HepG2 (cell line): ENCODE measurements at regions of chr16 and their contacts with region 1.

Region 1: DNA sequence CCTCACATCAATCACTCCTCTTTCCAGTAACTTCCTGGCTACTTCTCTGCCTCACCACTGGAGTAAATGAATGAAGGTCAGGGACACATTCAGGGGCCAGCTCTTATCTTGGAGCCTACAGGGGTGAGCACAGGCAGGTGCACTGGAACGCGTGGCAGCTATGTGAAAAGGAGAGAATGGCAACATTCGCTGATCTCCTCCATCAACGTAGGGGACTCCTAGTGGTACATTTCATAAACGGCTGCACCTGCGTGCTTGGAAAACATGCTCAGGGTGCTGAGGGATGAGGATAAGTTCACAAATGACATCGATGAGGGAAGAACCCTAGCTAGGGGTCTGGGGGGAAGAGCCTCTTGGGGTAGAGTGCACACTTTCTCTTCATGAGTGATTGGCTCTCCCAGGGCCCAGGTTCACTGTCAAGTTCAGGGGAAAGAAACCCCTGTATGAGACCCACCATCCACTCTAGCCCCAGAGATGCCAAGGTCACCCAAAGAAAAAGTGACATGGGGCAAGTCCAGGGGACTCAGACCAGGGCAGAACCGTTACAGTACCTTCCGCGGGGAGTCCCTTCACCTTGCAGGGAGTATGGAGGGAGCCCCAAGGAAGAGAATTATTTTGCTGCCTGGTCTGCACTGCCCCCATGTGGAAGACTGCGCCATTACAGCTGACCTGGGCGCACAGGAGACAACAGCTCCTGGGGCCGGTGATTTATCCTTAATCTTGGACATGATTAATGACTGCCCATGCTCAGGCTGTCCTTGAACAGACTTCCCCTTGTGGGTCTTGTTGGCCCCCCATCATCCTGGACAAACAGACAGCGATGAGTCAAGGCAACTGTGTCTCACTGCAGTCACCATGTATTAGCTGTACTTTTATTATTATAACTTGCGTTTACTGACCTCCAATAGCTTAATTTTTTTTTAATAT is 30.1 kb downstream of the VAC14 start:
- DNase-seq: peak; percentile 55
- ATAC-seq: peak; percentile 87
- H3K4me3 ChIP-seq: no peak overlapping the region
- H3K27ac ChIP-seq: no peak overlapping the region
- H3K4me1 ChIP-seq: peaks cover 12% of the 10 kb centered on the region
- H3K27me3 ChIP-seq: no peaks in the 10 kb centered on the region
- CTCF ChIP-seq: peak; percentile 93
- EP300 ChIP-seq: no peak
- POLR2A ChIP-seq: no peak
- RAD21 ChIP-seq: peak; percentile 95

Region 2: DNA sequence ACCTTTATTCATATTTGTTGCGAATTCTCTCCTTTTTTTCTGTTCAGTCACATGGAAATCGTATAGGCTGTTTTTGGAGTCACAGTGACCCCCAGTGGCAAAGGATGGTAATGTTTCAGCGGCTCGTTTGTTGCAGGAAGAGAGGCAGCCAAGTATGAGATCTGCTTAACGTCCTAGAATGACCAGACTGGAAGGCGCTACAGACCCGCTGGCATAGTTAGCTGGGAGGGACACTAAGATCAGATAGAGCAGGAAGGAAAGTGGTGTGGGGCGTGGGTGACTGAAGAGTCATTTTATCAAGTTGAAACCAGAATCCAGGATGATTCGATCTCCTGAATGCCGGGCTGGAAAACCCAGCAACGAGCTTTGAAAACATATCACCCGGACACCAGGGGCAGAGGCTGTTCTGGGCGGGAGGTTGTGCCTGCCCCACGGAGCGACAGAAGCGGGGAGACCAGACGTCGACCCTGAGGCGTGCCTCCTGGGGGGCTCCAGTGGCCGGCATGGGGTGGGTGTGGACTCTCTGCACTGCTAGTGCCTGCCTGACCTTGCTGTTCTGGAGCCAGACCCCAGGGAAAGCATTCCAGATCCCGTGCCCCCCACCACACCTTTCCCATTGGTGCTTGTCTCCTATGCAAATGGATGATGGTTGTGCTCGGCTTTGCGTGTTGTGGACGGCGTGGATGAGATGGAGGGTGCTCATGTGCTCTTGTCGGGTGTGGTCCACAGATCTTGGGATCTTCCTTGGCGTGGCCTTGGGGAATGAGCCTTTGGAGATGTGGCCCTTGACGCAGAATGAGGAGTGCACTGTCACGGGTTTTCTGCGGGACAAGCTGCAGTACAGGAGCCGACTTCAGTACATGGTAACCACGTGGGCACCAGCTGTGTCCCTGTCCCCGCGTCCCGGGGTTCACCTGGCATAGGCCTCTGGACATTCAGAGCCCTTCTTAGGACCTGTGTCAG is 116.8 kb before region 1 on chr16:
- CTCF ChIA-PET with region 1: interaction called, 17 read pairs
- POLR2A ChIA-PET with region 1: interaction called, 3 read pairs
- in situ Hi-C with region 1: loop called (anchors 5 kb)
- intact Hi-C with region 1: loop called (anchors 1 kb)
- DNase-seq: peak; percentile 86
- ATAC-seq: peak; percentile 51
- H3K4me3 ChIP-seq: peak overlapping the region; percentile 52 to 74 (median 70)
- H3K27ac ChIP-seq: no peak overlapping the region
- H3K4me1 ChIP-seq: peaks cover 39% of the 10 kb centered on the region
- H3K27me3 ChIP-seq: peaks cover 1 to 19% of the 10 kb centered on the region in 2 experiments; a peak in 4 of 5 replicates
- CTCF ChIP-seq: peak; percentile 96
- EP300 ChIP-seq: no peak
- POLR2A ChIP-seq: no peak
- RAD21 ChIP-seq: peak; percentile 85

Region 3: DNA sequence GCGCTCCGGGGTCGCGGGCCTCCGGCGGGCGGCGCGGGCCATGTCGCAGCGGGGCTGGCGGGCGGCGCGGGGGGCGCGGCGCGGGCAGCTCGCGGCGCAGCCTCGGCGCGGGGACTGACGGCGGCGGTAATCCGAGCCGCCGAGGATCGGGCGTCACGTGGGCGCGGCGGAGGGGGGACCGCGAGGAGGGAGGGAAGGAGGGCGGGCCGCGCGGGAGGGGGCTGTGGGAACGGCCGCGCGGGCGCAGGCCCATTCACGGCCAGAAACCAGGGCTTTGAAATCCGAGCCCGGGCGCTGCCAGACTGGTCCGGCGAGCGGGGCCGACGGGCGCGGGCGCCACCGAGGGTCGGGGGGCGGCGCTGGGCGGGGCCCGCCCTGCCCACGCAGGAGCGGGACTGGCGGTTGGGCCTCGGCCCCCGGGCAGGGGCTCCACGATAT is 84.9 kb before region 1 on chr16 and contains the start of gene MTSS2:
- CTCF ChIA-PET with region 1: interaction called, 21 read pairs
- POLR2A ChIA-PET with region 1: interaction called, 29 read pairs
- in situ Hi-C with region 1: no loop called
- intact Hi-C with region 1: loop called (anchors 1 kb)
- DNase-seq: peak; percentile 80
- ATAC-seq: peak; percentile 16
- H3K4me3 ChIP-seq: peak within 1 kb of the TSS; percentile 86 to 93 (median 91)
- H3K27ac ChIP-seq: peak within 1 kb of the TSS; percentile 91
- H3K4me1 ChIP-seq: peaks cover 80% of the 10 kb centered on the region
- H3K27me3 ChIP-seq: no peaks in the 10 kb centered on the region; a peak in 1 of 5 replicates
- CTCF ChIP-seq: no peak
- EP300 ChIP-seq: peak in 1 of 2 experiments; percentile 54; a peak in 2 of 4 replicates
- POLR2A ChIP-seq: peak in 1 of 2 experiments; percentile 18; a peak in 1 of 4 replicates
- RAD21 ChIP-seq: peak; percentile 67
- total RNA-seq, gene MTSS2: 84.6 and 132 TPM in 2 replicates

Region 4: GRCh38 chr16:70737377-70738082 is 33.4 kb before region 1 on chr16:
- CTCF ChIA-PET with region 1: interaction called, 9 read pairs
- POLR2A ChIA-PET with region 1: interaction called, 5 read pairs
- in situ Hi-C with region 1: no loop called
- intact Hi-C with region 1: loop called (anchors 2 kb)
- DNase-seq: no peak
- ATAC-seq: no peak
- H3K4me3 ChIP-seq: no peak overlapping the region
- H3K27ac ChIP-seq: peak overlapping the region; percentile 11
- H3K4me1 ChIP-seq: peaks cover 59% of the 10 kb centered on the region
- H3K27me3 ChIP-seq: no peaks in the 10 kb centered on the region
- CTCF ChIP-seq: no peak
- EP300 ChIP-seq: no peak
- POLR2A ChIP-seq: no peak
- RAD21 ChIP-seq: no peak

Region 5: DNA sequence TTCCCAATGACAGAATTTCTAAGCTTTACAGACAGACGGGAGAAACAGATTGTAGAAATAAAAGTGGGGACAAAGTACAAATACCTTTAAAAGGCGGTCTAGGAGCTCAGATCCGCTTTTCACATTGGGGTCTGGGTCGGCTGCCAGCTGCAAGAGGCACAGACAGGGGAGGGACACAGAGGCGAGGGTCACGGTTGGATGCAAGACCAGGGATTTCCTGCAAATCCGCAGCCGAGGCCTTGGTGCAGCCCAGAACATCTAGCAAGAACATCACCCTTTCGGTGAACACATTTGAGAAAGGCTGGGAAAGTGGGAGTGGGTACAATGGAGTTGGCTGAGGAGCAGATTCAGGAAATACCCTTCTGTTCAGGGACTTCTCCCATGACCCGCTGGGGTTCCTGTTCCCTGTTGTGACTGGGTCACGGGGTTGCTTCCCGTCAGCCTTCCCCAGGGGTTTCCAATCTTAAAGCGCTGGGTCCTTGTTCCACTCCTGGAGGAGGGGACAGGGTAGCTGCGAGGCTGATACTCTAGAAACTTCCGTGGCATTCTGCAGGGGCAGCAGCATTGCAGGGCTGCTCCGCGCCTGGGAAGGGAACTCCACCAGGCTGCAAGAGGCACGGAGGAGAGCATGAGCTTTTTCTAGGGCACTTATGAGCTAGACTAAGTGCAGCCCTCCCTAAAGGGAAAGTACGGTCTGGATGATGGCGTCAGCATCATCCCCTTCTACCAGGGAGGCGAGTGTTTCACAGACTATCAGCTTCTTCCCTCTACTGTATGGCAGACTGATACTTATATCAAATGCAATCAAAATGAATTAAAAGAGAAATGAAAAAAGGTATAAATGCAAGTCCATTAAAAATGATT is 14.0 kb after region 1 on chr16:
- CTCF ChIA-PET with region 1: no interaction called
- POLR2A ChIA-PET with region 1: no interaction called
- in situ Hi-C with region 1: no loop called
- intact Hi-C with region 1: no loop called
- DNase-seq: no peak
- ATAC-seq: no peak
- H3K4me3 ChIP-seq: no peak overlapping the region
- H3K27ac ChIP-seq: no peak overlapping the region
- H3K4me1 ChIP-seq: no peaks in the 10 kb centered on the region
- H3K27me3 ChIP-seq: no peaks in the 10 kb centered on the region
- CTCF ChIP-seq: no peak
- EP300 ChIP-seq: no peak
- POLR2A ChIP-seq: no peak
- RAD21 ChIP-seq: no peak